Activated CD4-positive, alpha-beta memory T cell treated with anti-CD3 and anti-CD28 coated beads, Interleukin-2, amount 10 ng/mL, durations not matched to agents 7 days and 5 days (primary cell): ENCODE measurements at regions of chr6 and their contacts with region 1.

Region 1: GRCh38 chr6:42547407-42548329 is 16.2 kb upstream of the UBR2 start:
- DNase-seq: peak; percentile 88
- H3K4me3 Mint-ChIP-seq: peak overlapping the region; percentile 54
- H3K27ac Mint-ChIP-seq: peak overlapping the region; percentile 33
- H3K4me1 Mint-ChIP-seq: peaks cover 20% of the 10 kb centered on the region
- H3K27me3 Mint-ChIP-seq: peaks cover 4% of the 10 kb centered on the region

Region 2: GRCh38 chr6:41427642-41428335 is 1119.9 kb before region 1 on chr6:
- CTCF ChIA-PET with region 1: no interaction called
- POLR2A ChIA-PET with region 1: no interaction called
- DNase-seq: no peak
- H3K4me3 Mint-ChIP-seq: no peak overlapping the region
- H3K27ac Mint-ChIP-seq: no peak overlapping the region
- H3K4me1 Mint-ChIP-seq: peaks cover 6% of the 10 kb centered on the region
- H3K27me3 Mint-ChIP-seq: peaks cover 32% of the 10 kb centered on the region

Region 3: DNA sequence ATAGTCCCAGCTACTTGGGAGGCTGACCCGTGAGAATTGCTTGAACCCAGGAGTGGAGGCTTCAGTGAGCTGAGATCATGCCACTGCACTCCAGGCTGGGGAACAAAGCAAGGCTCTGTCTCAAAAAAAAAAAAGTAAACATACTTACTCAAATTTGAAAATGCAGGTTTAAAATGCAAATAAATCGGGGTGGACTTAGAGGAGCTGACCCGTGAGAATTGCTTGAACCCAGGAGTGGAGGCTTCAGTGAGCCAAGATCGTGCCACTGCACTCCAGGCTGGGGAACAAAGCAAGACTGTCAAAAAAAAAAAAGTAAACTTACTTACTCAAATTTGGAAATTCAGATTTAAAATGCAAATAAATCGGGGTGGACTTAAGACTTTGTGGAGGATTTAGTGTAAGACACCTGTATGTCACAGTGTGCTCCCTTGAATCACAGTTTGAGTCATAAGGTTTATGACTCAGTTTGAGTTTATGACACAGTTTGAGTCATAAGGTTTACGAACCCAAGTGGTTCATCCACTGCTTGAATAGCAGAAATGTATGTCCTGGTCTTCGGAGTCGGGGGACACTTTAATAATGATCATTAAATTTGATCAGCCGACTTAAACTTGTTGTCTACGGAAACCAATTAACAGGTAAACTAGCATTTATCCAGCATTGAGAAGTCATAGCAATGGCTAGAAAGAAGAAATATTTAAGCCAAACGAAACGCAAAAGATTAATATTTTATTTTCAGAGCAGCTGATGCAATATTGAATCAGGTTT is 323.3 kb before region 1 on chr6:
- CTCF ChIA-PET with region 1: interaction called, 28 read pairs
- POLR2A ChIA-PET with region 1: no interaction called
- DNase-seq: no peak
- H3K4me3 Mint-ChIP-seq: no peak overlapping the region
- H3K27ac Mint-ChIP-seq: peak overlapping the region; percentile 69
- H3K4me1 Mint-ChIP-seq: peaks cover 12% of the 10 kb centered on the region
- H3K27me3 Mint-ChIP-seq: no peaks in the 10 kb centered on the region

Region 4: GRCh38 chr6:42302411-42302810 is 245.3 kb before region 1 on chr6:
- CTCF ChIA-PET with region 1: interaction called, 61 read pairs
- POLR2A ChIA-PET with region 1: no interaction called
- DNase-seq: no peak
- H3K4me3 Mint-ChIP-seq: no peak overlapping the region
- H3K27ac Mint-ChIP-seq: no peak overlapping the region
- H3K4me1 Mint-ChIP-seq: no peaks in the 10 kb centered on the region
- H3K27me3 Mint-ChIP-seq: no peaks in the 10 kb centered on the region

Region 5: DNA sequence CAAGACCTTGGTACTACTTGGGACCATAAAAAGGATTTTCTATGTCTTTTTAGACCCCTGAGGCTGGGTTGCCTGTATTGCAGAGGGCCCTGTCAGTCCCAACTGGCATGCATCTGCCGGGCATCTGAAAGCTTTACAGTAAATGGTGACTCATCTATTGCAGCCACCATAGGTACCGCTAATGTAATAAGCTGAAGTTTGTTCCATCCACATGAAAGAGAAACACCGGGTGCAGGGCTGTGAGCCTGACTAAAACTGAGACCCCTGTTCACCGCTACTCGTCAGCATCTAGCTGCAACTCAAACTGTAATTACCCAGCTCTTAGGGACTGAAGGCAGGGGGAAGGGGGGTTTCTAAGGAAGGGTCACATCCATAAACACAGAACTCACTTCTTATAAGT is 145.5 kb before region 1 on chr6:
- CTCF ChIA-PET with region 1: interaction called, 11 read pairs
- POLR2A ChIA-PET with region 1: no interaction called
- DNase-seq: peak; percentile 68
- H3K4me3 Mint-ChIP-seq: peak overlapping the region; percentile 6
- H3K27ac Mint-ChIP-seq: peak overlapping the region; percentile 58
- H3K4me1 Mint-ChIP-seq: peaks cover 63% of the 10 kb centered on the region
- H3K27me3 Mint-ChIP-seq: no peaks in the 10 kb centered on the region

Region 6: DNA sequence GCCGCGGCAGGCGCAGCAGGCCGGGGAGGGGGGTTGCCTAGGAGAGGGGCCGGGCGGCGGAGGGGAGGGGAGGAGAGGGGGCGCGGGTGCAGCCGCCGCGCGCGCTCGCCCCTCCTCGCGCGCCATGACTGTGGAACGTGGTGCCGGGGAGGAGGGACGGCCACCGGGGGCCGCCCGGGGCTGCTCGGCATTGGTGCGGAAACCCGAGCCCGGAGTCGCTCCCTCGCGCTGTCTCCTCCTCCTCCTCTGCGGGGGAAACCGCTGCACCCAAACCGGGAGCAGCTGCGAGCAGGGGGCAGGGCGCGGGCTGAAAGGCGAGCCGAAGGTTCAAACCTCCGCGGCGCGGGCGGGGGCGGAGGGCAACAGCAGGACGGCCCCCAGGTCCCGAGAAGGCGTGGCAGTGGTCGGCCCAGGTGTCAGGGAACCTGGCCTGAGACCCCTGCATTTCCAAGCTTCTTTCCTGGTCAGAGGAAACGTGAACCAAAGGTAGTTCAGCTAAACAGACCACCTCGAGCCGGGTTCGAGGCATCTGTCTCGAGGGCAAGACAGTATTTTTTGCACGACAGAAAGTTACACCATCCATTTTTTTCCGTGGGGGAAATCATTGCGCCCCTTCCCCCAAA is 94.5 kb before region 1 on chr6:
- CTCF ChIA-PET with region 1: interaction called, 22 read pairs
- POLR2A ChIA-PET with region 1: interaction called, 6 read pairs
- DNase-seq: peak; percentile 82
- H3K4me3 Mint-ChIP-seq: peak overlapping the region; percentile 87
- H3K27ac Mint-ChIP-seq: no peak overlapping the region
- H3K4me1 Mint-ChIP-seq: peaks cover 34% of the 10 kb centered on the region
- H3K27me3 Mint-ChIP-seq: peaks cover 3% of the 10 kb centered on the region

Region 7: GRCh38 chr6:42537536-42537935 is 10.1 kb before region 1 on chr6:
- CTCF ChIA-PET with region 1: interaction called, 47 read pairs
- POLR2A ChIA-PET with region 1: no interaction called
- DNase-seq: no peak
- H3K4me3 Mint-ChIP-seq: no peak overlapping the region
- H3K27ac Mint-ChIP-seq: no peak overlapping the region
- H3K4me1 Mint-ChIP-seq: no peaks in the 10 kb centered on the region
- H3K27me3 Mint-ChIP-seq: peaks cover 11% of the 10 kb centered on the region

Region 8: GRCh38 chr6:43211955-43212354 is 664.3 kb after region 1 on chr6:
- CTCF ChIA-PET with region 1: no interaction called
- POLR2A ChIA-PET with region 1: no interaction called
- DNase-seq: no peak
- H3K4me3 Mint-ChIP-seq: no peak overlapping the region
- H3K27ac Mint-ChIP-seq: no peak overlapping the region
- H3K4me1 Mint-ChIP-seq: no peaks in the 10 kb centered on the region
- H3K27me3 Mint-ChIP-seq: no peaks in the 10 kb centered on the region